ENCODE measurements at regions of chr6 and their contacts with region 1.

Region 1: GRCh38 chr6:111605100-111605751 is 452 bp downstream of the TRAF3IP2 start:
- DNase-seq: peak; percentile 54
- H3K4me3 ChIP-seq: peak overlapping the region; percentile 61 to 85 (median 83)
- H3K27ac ChIP-seq: peak overlapping the region; percentile 97
- H3K4me1 ChIP-seq: peaks cover 41% of the 10 kb centered on the region
- H3K27me3 ChIP-seq: no peaks in the 10 kb centered on the region
- CTCF ChIP-seq: no peak

Region 2: GRCh38 chr6:111462770-111463391 is 142.3 kb before region 1 on chr6:
- CTCF ChIA-PET with region 1: no interaction called
- dilution Hi-C with region 1: no loop called
- in situ Hi-C with region 1: no loop called
- intact Hi-C with region 1: no loop called
- DNase-seq: peak; percentile 65
- H3K4me3 ChIP-seq: no peak overlapping the region
- H3K27ac ChIP-seq: no peak overlapping the region
- H3K4me1 ChIP-seq: peaks cover 5% of the 10 kb centered on the region
- H3K27me3 ChIP-seq: no peaks in the 10 kb centered on the region
- CTCF ChIP-seq: no peak

Region 3: DNA sequence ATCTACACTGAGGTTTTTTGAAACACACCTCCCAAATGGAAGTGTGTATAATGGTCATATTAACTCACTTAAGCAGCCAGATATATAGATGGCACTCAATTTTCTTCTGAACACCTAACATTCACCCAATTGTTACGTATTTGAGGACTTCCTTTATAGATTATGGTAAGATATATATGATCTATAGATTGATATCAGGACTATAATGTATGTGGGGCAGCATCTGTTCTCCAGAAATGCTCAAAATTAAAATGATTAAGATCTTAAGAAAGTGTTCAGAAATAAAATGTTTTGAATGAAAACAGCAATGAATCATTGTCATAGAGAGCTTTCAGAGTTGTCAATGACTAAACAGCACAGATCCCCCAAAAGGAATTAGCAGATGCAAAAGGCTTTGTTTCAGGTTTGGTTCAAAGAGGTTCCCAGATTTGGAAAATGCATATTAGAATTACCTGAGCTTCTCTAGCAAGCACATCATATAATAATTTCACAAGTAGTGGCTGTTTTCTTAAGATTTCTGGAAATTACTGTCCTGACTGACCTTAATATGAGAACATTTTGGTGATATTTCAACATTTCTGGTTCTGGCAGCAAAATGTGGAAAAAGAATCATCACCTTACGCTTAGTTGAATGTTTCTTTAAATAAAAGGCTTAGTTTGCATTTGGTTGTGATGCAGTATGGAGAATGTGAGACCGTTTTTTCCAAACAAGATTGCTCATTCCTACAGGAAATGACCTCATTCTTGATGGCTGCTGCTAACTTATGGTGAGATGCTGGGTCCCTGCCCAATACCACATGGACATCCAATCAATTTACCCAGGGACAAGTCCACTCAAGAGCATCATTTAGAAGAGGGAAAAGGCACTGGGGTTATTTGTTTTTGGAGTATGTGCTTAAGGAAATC is 31.1 kb before region 1 on chr6:
- CTCF ChIA-PET with region 1: no interaction called
- dilution Hi-C with region 1: no loop called
- in situ Hi-C with region 1: no loop called
- intact Hi-C with region 1: loop called (anchors 1 kb)
- DNase-seq: peak; percentile 80
- H3K4me3 ChIP-seq: no peak overlapping the region
- H3K27ac ChIP-seq: peak overlapping the region; percentile 66
- H3K4me1 ChIP-seq: peaks cover 36% of the 10 kb centered on the region
- H3K27me3 ChIP-seq: no peaks in the 10 kb centered on the region
- CTCF ChIP-seq: no peak

Region 4: DNA sequence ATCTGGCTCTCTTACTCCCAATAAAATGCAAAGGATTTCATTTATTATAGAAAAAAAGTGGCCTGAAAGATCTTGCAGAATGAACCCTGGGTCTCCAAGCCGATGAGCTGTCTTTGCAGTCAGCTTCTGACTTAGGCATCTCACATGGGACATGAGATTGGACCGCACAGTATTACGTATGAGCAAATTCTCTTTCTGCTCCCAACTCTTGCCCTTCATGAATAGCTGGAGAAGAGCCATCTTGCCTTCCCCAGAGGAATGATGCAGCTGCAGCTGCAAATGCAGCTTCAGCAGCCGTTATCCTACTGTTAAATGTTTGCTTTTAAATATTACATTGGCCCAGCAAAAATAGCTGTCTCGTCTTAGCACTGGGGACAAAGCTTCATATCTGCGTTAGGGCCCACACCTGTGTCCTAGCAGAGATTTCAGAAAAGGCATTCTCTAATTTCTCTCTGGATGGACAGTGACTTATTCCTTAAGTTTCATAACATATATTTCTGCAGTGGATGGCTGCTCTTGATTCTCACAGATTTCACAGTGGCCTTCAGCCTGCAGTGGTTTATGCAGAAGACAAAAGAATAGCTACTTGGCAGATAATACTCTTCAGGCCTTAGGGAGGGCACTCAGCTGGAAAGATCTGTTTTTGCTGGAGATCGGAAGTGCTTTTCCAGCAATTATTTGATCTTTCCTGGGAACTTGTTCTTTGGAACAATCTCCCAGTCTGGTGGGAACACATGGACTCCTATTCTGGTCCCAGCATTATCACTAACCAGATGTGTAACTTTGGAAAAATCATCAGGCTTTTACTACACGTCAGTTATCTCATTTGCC is 138.9 kb after region 1 on chr6:
- CTCF ChIA-PET with region 1: no interaction called
- dilution Hi-C with region 1: no loop called
- in situ Hi-C with region 1: no loop called
- intact Hi-C with region 1: no loop called
- DNase-seq: no peak
- H3K4me3 ChIP-seq: no peak overlapping the region
- H3K27ac ChIP-seq: no peak overlapping the region
- H3K4me1 ChIP-seq: no peaks in the 10 kb centered on the region
- H3K27me3 ChIP-seq: no peaks in the 10 kb centered on the region
- CTCF ChIP-seq: no peak

Measured in mammary epithelial cell (primary cell).